GM12878 (cell line): ENCODE measurements at regions of chr7 and their contacts with region 1.

Region 1: DNA sequence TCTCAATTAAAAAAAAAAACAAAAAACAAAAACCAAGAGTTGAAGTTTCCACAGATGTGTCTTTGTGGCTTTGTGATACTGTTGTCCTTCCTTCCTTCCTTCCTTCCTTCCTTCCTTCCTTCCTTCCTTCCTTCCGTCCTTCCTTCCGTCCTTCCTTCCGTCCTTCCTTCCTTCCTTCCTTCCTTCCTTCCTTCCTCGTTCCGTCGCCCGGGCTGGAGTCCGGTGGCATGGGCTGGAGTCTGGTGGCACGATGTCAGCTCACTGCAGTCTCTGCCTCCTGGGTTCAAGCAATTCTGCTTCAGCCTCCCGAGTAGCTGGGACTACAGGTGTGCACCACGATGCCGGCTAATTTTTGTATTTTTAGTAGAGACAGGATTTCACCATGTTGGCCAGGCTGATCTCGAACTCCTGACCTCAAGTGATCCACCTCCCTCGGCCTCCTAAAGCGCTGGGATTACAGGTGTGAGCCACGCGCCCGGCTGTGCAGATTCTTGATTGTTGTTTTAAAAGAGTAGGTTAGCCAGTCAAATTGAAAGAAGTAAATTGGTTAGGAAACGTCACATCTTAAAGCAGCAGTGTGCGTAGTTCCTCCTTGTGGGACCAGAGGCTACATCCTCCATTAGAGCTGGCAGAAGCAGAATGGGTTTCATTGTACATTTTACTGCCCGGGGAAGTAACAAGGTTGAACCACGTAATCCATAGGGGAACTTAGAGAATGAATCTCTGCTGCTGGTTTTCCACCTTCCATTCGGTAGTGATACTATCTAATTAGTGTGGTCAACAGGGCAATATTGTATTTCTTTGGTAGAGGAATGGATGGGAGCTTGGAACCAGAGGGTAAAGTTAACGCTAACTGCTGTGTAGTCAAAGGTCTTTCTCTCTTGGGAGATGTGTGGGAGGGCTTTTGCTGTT is 20.6 kb downstream of the DNAJB6 start:
- DNase-seq: peak; percentile 65
- ATAC-seq: peak; percentile 93
- H3K4me3 ChIP-seq: no peak overlapping the region
- H3K27ac ChIP-seq: peak overlapping the region; percentile 33
- H3K4me1 ChIP-seq: peaks cover 19% of the 10 kb centered on the region
- H3K27me3 ChIP-seq: no peaks in the 10 kb centered on the region
- CTCF ChIP-seq: no peak
- EP300 ChIP-seq: peak; percentile 58 to 69; a peak in 2 of 4 replicates
- POLR2A ChIP-seq: no peak
- RAD21 ChIP-seq: no peak

Region 2: DNA sequence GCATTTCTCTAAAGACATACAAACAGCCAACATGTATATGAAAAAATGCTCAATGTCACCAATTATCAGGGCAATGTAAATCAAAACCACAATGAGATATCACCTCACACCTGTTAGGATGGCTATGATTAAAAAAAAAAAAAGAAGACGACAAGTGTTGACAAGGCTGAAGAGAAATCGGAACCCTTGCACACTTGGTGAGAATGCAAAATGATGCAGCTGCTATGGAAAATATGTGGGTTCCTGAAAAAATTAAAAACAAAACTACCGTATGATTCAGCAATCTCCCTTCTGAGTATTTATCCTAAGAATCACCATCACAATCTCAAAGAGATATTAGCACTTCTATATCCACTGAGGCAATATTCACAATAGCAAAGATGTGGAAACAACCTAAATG is 475.7 kb before region 1 on chr7:
- CTCF ChIA-PET with region 1: no interaction called
- POLR2A ChIA-PET with region 1: no interaction called
- RAD21 ChIA-PET with region 1: no interaction called
- SMC1A ChIA-PET with region 1: no interaction called
- in situ Hi-C with region 1: no loop called
- intact Hi-C with region 1: no loop called
- DNase-seq: no peak
- ATAC-seq: peak; percentile 33
- H3K4me3 ChIP-seq: no peak overlapping the region
- H3K27ac ChIP-seq: no peak overlapping the region; the same call in 1 of the 2 replicates
- H3K4me1 ChIP-seq: no peaks in the 10 kb centered on the region
- H3K27me3 ChIP-seq: no peaks in the 10 kb centered on the region
- CTCF ChIP-seq: no peak
- EP300 ChIP-seq: no peak
- POLR2A ChIP-seq: no peak
- RAD21 ChIP-seq: no peak

Region 3: DNA sequence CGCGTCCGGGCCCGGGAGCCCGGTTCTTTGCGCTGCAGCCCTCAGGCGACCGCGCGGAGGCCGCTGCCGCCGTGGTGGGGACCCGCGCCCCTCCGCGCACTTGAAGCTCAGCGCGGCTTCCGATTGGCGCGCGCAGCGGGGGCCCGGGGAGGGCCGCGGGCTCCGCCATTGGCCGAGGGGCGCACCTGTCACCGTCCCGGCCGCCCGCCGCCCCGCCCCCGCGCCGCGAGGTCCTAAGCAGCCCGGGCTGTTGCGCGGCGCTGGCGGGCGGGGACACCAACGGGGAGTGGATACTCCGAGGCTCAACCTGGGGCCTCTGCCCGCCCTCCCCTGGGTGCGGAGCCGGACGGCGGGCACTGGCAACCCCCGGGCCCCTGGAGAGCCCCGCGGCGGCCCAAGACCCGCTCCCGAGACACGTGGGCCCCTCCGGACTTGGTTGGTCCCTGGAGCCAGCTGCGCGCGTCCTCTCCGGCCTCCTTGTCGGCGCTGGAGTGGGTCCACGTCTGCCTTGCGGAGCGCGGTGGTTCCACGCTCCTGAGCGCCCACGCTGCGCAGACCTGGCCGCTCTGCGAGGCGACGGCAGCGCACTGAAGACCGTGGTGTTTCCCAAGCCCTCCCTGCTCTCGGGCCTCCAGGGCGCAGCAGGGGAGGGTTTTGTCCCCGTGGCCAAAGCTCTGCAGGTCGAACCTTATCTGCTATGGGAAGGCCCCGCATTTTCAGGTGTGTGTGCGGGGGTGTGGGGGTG is 346.6 kb before region 1 on chr7 and contains the start of gene MNX1:
- CTCF ChIA-PET with region 1: no interaction called
- POLR2A ChIA-PET with region 1: no interaction called
- RAD21 ChIA-PET with region 1: no interaction called
- SMC1A ChIA-PET with region 1: no interaction called
- in situ Hi-C with region 1: no loop called
- intact Hi-C with region 1: loop called (anchors 10 kb)
- DNase-seq: no peak
- ATAC-seq: peak; percentile 92
- H3K4me3 ChIP-seq: peak within 1 kb of the TSS; percentile 74
- H3K27ac ChIP-seq: no peak within 1 kb of the TSS
- H3K4me1 ChIP-seq: peaks cover 19% of the 10 kb centered on the region
- H3K27me3 ChIP-seq: peaks cover 0 to 12% of the 10 kb centered on the region in 2 experiments; a peak in 1 of 4 replicates
- CTCF ChIP-seq: no peak
- EP300 ChIP-seq: no peak
- POLR2A ChIP-seq: peak; percentile 55
- RAD21 ChIP-seq: no peak
- polyA plus RNA-seq, gene MNX1: 0.22 TPM in 1 of 2 experiments, not detected in the other

Region 4: GRCh38 chr7:157555313-157555712 is 197.9 kb after region 1 on chr7:
- CTCF ChIA-PET with region 1: no interaction called
- POLR2A ChIA-PET with region 1: no interaction called
- RAD21 ChIA-PET with region 1: no interaction called
- SMC1A ChIA-PET with region 1: no interaction called
- in situ Hi-C with region 1: no loop called
- intact Hi-C with region 1: no loop called
- DNase-seq: no peak
- ATAC-seq: no peak
- H3K4me3 ChIP-seq: no peak overlapping the region
- H3K27ac ChIP-seq: no peak overlapping the region
- H3K4me1 ChIP-seq: no peaks in the 10 kb centered on the region
- H3K27me3 ChIP-seq: no peaks in the 10 kb centered on the region
- CTCF ChIP-seq: no peak
- EP300 ChIP-seq: no peak
- POLR2A ChIP-seq: no peak
- RAD21 ChIP-seq: no peak

Region 5: GRCh38 chr7:157784979-157785441 is 427.6 kb after region 1 on chr7:
- CTCF ChIA-PET with region 1: no interaction called
- POLR2A ChIA-PET with region 1: no interaction called
- RAD21 ChIA-PET with region 1: no interaction called
- SMC1A ChIA-PET with region 1: no interaction called
- in situ Hi-C with region 1: no loop called
- intact Hi-C with region 1: no loop called
- DNase-seq: no peak
- ATAC-seq: no peak
- H3K4me3 ChIP-seq: no peak overlapping the region
- H3K27ac ChIP-seq: no peak overlapping the region
- H3K4me1 ChIP-seq: no peaks in the 10 kb centered on the region
- H3K27me3 ChIP-seq: no peaks in the 10 kb centered on the region
- CTCF ChIP-seq: no peak
- EP300 ChIP-seq: no peak
- POLR2A ChIP-seq: no peak
- RAD21 ChIP-seq: no peak

Region 6: GRCh38 chr7:157937406-157937805 is 580.0 kb after region 1 on chr7:
- CTCF ChIA-PET with region 1: no interaction called
- POLR2A ChIA-PET with region 1: no interaction called
- RAD21 ChIA-PET with region 1: no interaction called
- SMC1A ChIA-PET with region 1: no interaction called
- in situ Hi-C with region 1: no loop called
- intact Hi-C with region 1: no loop called
- DNase-seq: no peak
- ATAC-seq: no peak
- H3K4me3 ChIP-seq: no peak overlapping the region
- H3K27ac ChIP-seq: no peak overlapping the region
- H3K4me1 ChIP-seq: no peaks in the 10 kb centered on the region
- H3K27me3 ChIP-seq: no peaks in the 10 kb centered on the region
- CTCF ChIP-seq: no peak
- EP300 ChIP-seq: no peak
- POLR2A ChIP-seq: no peak
- RAD21 ChIP-seq: no peak